GM23248 (cell line): ENCODE measurements at regions of chr6 and their contacts with region 1.

Region 1: GRCh38 chr6:138115877-138116660 is 8.8 kb upstream of the PERP start:
- DNase-seq: peak; percentile 90
- H3K4me3 ChIP-seq: no peak overlapping the region
- H3K27ac ChIP-seq: no peak overlapping the region
- H3K4me1 ChIP-seq: no peaks in the 10 kb centered on the region
- H3K27me3 ChIP-seq: 0 out of 2 replicates have a peak, but pooled peaks cover 7% of the 10 kb centered on the region

Region 2: DNA sequence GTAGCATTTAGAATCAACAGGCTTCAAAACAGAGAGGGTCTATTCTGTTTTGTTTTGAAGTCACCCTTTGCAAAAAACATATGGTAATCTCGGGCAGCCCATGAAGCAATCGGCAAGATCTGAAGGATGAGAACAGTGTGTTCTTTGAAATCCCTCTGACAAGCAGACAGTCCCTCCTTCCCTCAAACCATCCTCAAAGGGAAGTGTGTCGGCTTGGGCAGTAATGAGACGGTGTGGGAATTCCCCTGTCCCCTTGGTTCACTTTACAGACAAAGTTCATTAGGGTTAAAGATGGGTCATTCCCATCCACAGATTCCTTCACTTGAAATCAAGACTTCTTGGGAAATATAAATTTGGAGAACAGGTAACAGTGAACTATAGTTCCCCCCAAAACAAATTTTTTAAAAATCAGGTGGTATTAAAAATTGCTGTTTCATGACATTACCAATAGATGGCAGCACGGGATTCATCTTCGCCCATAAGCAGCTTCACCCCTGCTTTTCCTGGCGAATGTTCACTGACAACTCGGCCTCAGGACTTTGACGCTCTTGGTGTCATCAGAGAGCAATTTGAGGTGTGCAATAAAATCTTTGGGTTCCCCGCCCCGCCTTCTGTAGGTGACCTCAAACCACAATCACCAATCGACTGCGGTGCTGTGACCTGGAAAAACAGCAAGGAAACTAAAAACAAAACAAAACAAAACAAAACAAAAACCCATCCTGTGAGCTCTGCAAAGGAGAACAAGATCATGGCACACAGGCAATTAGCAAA is 408.3 kb before region 1 on chr6:
- in situ Hi-C with region 1: loop called (anchors 25 kb)
- DNase-seq: peak; percentile 86
- H3K4me3 ChIP-seq: peak overlapping the region; percentile 58
- H3K27ac ChIP-seq: no peak overlapping the region
- H3K4me1 ChIP-seq: peaks cover 11% of the 10 kb centered on the region
- H3K27me3 ChIP-seq: no peaks in the 10 kb centered on the region

Region 3: DNA sequence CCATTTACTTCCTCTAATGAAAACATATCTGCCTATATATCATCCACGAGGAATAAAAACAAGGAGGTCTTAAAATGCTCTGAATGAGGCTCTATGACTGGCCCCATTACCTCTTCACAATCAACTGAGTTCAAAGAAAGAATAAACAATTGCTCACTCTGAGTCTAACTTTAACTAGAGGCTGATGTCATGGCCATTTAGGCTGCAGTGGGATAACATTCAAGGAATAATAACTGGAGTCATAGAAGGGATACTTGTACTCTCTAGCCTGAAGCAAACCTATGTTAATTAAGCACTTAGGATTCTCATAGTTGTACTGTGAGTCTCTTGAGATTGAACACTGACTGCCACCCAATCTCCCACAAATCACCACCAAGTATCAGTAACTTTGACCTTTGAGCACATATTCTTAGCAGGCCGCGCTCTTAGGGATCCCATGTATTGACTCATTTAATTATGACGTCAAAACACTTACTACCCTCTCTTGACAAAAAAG is 79.0 kb before region 1 on chr6:
- in situ Hi-C with region 1: no loop called
- DNase-seq: peak; percentile 13
- H3K4me3 ChIP-seq: no peak overlapping the region
- H3K27ac ChIP-seq: no peak overlapping the region
- H3K4me1 ChIP-seq: no peaks in the 10 kb centered on the region
- H3K27me3 ChIP-seq: no peaks in the 10 kb centered on the region; the same call in 1 of the 2 replicates

Region 4: DNA sequence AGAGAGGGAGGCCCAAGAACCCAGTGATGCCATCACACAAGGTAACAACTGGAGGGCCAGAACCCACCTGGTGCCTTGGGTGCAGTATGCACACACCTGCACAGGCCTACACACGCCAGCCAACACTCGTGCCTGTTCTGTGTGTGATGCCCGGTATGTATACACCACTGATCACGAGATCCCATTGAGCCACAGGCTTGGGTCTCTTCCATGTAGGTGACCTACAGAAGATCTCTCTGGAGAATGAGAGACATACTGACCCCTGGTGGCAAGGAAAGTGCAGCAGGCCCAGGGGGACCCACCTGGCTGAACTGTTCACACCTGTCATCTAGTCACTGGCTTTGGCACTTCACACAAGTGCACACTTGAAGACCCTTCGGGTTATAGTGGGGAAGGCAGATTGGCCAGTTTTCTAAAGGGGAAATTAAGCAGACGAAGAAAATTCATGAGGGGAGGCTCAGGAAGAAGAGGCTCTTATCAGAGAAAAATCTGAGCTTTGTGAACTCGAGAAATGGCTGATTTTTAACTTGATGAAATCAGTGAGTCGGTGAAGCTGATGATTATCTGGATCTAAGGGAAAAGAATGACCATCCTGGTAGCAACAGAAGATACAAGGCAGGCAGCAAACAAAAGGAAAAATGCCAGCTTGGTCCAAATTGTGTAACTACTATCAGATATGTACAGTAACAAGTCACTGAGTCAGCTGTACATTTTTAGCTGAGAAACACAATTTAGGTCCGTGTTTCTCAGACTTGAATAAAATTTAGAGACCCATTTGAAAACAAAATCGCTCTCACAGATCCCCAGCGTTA is 171.3 kb after region 1 on chr6:
- in situ Hi-C with region 1: loop called (anchors 5 kb)
- DNase-seq: peak; percentile 52
- H3K4me3 ChIP-seq: no peak overlapping the region
- H3K27ac ChIP-seq: peak overlapping the region; percentile 69; the same call in 1 of the 2 replicates
- H3K4me1 ChIP-seq: peaks cover 21% of the 10 kb centered on the region
- H3K27me3 ChIP-seq: no peaks in the 10 kb centered on the region

Region 5: GRCh38 chr6:138403801-138404661 is 288.0 kb after region 1 on chr6 and contains the start of gene HEBP2:
- in situ Hi-C with region 1: loop called (anchors 10 kb)
- DNase-seq: peak; percentile 88
- H3K4me3 ChIP-seq: peak within 1 kb of the TSS; percentile 90
- H3K27ac ChIP-seq: peak within 1 kb of the TSS; percentile 34
- H3K4me1 ChIP-seq: 0 out of 2 replicates have a peak, but pooled peaks cover 3% of the 10 kb centered on the region
- H3K27me3 ChIP-seq: no peaks in the 10 kb centered on the region
- total RNA-seq, gene HEBP2: 32.4 and 62.8 TPM in 2 replicates

Region 6: GRCh38 chr6:138517635-138518034 is 401.6 kb after region 1 on chr6:
- in situ Hi-C with region 1: loop called (anchors 25 kb)
- DNase-seq: peak; percentile 70
- H3K4me3 ChIP-seq: no peak overlapping the region
- H3K27ac ChIP-seq: no peak overlapping the region
- H3K4me1 ChIP-seq: no peaks in the 10 kb centered on the region
- H3K27me3 ChIP-seq: no peaks in the 10 kb centered on the region

Region 7: GRCh38 chr6:138752017-138752416 is 635.9 kb after region 1 on chr6:
- in situ Hi-C with region 1: loop called (anchors 10 kb)
- DNase-seq: no peak
- H3K4me3 ChIP-seq: no peak overlapping the region
- H3K27ac ChIP-seq: no peak overlapping the region
- H3K4me1 ChIP-seq: no peaks in the 10 kb centered on the region
- H3K27me3 ChIP-seq: no peaks in the 10 kb centered on the region